Endothelial cell of umbilical vein (primary cell): ENCODE measurements at regions of chr5 and their contacts with region 1.

Region 1: DNA sequence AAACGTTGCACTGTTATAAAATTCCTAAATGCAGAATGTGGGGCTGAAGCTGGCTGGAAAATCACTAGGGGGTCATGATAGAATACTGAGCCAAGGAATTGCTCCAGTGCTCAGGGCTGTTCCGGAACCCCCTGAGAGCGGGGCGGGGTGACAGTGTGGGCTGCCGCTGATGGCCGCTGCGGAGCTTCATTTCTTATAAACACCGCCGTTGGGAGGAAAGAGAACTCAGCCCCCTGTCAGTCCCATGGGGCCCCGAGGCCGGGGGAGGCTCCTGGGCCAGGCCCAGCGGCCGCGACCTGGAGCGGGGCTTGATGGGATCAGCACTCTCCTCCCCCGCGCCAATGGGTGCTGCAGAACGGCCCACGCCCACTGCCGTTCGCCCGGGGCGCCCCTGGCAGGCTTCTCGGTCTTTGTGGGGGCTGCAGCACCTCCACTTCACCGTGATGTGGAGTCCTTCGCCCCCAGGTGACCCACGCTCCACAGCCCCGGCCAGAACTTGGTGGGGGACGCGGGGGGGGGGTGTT is 5.2 kb upstream of the IRF1 start:
- DNase-seq: peak; percentile 50
- H3K4me3 ChIP-seq: peak overlapping the region; percentile 11 to 39 (median 30)
- H3K27ac ChIP-seq: peak overlapping the region; percentile 56
- H3K4me1 ChIP-seq: peaks cover 30% of the 10 kb centered on the region
- H3K27me3 ChIP-seq: no peaks in the 10 kb centered on the region
- CTCF ChIP-seq: no peak
- POLR2A ChIP-seq: peak; percentile 50

Region 2: GRCh38 chr5:132180134-132180745 is 315.5 kb before region 1 on chr5:
- CTCF ChIA-PET with region 1: interaction called, 3 read pairs
- POLR2A ChIA-PET with region 1: no interaction called
- dilution Hi-C with region 1: no loop called
- intact Hi-C with region 1: loop called (anchors 5 kb)
- DNase-seq: peak; percentile 78
- H3K4me3 ChIP-seq: no peak overlapping the region
- H3K27ac ChIP-seq: no peak overlapping the region
- H3K4me1 ChIP-seq: peaks cover 16% of the 10 kb centered on the region
- H3K27me3 ChIP-seq: no peaks in the 10 kb centered on the region
- CTCF ChIP-seq: peak; percentile 70 to 74
- POLR2A ChIP-seq: no peak

Region 3: GRCh38 chr5:132410451-132411381 is 85.0 kb before region 1 on chr5:
- CTCF ChIA-PET with region 1: interaction called, 23 read pairs
- POLR2A ChIA-PET with region 1: interaction called, 6 read pairs
- dilution Hi-C with region 1: no loop called
- intact Hi-C with region 1: loop called (anchors 1 kb)
- DNase-seq: peak; percentile 79
- H3K4me3 ChIP-seq: peak overlapping the region; percentile 69 to 77 (median 76)
- H3K27ac ChIP-seq: peak overlapping the region; percentile 92
- H3K4me1 ChIP-seq: peaks cover 46% of the 10 kb centered on the region
- H3K27me3 ChIP-seq: no peaks in the 10 kb centered on the region
- CTCF ChIP-seq: peak; percentile 72 to 82
- POLR2A ChIP-seq: peak; percentile 48

Region 4: DNA sequence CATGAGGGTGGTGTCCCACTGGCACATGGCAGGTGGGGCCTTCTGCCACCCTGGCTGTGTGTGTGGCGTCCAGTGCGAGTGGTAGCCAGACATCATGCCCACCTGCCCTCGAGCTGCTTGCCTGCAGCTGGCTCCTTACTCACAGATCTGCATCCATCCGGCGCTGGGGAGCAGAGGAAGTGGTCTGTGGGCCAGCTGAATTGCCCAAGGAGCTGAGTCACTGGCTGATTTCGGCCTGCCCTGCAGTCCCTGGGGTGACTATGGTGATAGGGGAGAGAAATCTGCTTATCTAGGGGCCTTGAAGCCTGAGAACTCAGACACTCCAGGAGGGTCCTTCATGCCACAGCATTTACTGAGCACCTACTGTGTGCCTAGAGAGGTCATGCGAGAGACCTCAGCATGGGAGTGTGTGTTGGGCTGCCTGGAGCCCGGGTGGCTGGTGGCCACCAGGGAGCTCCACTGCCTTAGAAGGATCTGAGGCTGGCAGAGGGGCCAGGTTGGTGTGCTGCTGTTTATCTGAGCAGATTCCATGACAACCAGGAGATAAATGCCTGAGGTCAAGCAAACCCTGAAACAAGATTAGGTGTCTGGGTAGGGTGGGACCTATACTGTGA is 69.1 kb before region 1 on chr5:
- CTCF ChIA-PET with region 1: interaction called, 32 read pairs
- POLR2A ChIA-PET with region 1: interaction called, 6 read pairs
- dilution Hi-C with region 1: no loop called
- intact Hi-C with region 1: loop called (anchors 1 kb)
- DNase-seq: peak; percentile 80
- H3K4me3 ChIP-seq: no peak overlapping the region
- H3K27ac ChIP-seq: peak overlapping the region; percentile 62
- H3K4me1 ChIP-seq: peaks cover 31% of the 10 kb centered on the region
- H3K27me3 ChIP-seq: no peaks in the 10 kb centered on the region
- CTCF ChIP-seq: peak; percentile 53 to 54
- POLR2A ChIP-seq: no peak

Region 5: DNA sequence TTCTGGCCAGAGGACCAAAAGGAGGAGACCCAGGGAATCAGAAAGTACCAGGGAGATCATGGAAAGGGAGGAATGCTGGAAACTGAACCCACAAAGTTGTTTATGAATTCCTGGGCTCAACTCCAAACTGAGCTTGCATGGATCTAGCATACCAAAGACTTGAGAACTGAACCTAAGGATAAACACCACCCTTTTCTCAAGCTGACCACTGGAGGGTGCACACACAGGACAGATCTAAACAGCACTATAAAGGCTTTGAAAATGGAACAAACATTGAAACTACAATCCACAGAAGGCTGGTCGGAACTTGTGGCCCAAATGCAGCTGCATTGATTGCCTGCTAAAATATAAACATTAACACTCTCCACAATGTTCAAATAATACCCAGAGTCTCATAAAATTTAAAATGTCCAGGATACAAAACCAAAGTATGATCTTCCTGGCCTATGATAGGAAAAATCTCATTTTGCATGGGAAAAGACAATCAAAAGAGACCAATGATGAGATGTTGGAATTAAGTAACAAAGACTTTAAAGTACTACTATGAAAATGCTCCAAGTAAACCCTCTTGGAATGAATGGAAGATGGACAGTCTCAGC is 10.5 kb after region 1 on chr5:
- CTCF ChIA-PET with region 1: interaction called, 41 read pairs
- POLR2A ChIA-PET with region 1: interaction called, 8 read pairs
- dilution Hi-C with region 1: no loop called
- intact Hi-C with region 1: no loop called
- DNase-seq: peak; percentile 67
- H3K4me3 ChIP-seq: no peak overlapping the region
- H3K27ac ChIP-seq: no peak overlapping the region
- H3K4me1 ChIP-seq: peaks cover 35% of the 10 kb centered on the region
- H3K27me3 ChIP-seq: no peaks in the 10 kb centered on the region
- CTCF ChIP-seq: peak; percentile 43 to 68
- POLR2A ChIP-seq: no peak

Region 6: DNA sequence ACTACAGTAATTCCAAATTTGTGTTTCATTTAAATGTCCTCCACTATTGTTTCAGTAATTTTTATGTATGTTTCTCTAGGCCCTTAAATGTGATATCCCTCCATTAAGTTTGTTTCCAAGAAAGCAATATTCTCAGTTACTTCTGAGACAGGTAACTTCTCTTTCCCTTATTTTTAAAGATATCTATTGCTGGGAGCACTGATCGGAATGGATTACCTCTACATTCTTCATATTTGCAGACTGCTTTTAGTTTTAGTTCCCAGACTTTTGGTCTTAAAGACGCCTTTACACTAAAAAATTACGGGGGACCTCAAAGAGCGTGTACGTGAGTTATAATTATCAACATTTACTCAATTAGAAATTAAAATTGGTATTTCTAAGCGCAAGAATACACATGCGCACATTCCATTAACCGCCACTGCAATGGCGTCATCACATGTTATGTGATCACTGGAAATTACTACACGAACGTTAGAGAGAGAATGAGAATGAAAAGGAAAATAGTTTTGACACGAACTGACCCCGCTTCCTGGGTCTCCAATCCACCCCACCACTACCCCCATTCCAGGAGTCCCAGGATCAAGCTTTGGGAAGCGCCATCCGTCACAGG is 60.5 kb after region 1 on chr5:
- CTCF ChIA-PET with region 1: no interaction called
- POLR2A ChIA-PET with region 1: no interaction called
- dilution Hi-C with region 1: no loop called
- intact Hi-C with region 1: no loop called
- DNase-seq: peak; percentile 2
- H3K4me3 ChIP-seq: peak overlapping the region; percentile 63 to 90 (median 64)
- H3K27ac ChIP-seq: peak overlapping the region; percentile 69
- H3K4me1 ChIP-seq: peaks cover 15% of the 10 kb centered on the region
- H3K27me3 ChIP-seq: peaks cover 0 to under 1% of the 10 kb centered on the region in 2 experiments
- CTCF ChIP-seq: no peak
- POLR2A ChIP-seq: no peak